Right ventricle myocardium inferior (tissue), 1 donor: ENCODE measurements at regions of chr6 and their contacts with region 1.

Region 1: DNA sequence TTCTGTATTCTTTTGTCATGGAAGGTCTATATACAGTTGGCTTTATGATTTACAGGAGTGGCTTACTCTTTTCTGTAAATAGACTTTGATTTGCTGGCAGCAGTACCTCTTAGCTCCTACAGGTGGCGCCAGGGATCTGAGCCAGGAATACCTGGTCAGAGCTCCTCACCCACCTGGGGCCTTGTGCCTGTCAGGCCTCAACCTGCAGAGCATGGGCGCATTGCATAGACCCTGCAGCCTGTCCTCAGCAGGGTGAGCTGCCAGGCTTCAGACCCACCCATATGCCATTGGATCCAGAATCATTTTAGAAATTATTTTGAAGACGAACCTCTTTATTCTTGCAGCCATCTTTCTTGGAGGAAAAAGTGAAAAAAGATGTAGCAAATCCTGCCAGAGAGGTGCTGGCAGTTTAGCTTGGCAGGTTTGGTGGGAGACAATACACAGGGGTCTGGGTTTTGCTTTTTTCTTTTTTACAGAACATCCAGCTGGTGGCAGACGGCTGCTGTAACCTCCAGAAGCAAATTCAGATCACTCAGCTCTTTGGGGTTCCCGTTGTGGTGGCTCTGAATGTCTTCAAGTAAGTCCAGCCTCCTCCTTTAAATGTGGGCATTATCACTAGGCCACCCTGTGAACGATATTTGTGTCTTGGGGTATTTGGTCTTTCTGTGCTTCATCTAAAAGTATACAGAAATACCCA is 149.1 kb downstream of the MTHFD1L start:
- DNase-seq: peak; percentile 82
- ATAC-seq: peak; percentile 81

Region 2: DNA sequence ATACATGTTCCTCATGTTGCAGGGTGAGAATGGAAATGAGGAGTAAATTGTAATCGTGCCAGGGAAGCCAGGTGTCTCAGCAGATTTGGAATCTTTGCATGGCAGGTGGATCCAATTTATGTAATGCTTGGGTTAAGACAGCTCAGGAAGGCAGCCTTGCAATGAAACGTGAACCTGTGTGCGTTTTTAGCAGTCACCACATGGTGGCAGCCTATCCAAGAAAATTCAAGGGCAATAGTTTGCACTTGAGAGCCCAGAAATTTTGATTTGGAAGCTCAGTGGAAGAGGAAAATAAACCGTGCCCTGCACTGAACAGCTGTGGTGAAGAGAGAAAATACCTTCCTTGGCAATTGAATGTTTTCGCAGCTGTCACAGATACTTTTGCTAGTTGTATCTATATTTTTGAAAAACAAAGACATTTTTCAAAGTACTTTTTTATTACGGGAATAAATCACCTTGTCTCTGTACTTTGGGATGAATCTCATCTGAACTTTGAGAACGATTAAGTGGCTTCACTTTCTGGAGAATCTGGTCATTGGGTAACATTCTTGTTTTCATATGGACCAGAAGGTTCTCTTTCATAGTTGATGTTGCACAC is 122.6 kb before region 1 on chr6:
- intact Hi-C with region 1: loop called (anchors 2 kb)
- DNase-seq: no peak
- ATAC-seq: peak; percentile 74

Region 3: DNA sequence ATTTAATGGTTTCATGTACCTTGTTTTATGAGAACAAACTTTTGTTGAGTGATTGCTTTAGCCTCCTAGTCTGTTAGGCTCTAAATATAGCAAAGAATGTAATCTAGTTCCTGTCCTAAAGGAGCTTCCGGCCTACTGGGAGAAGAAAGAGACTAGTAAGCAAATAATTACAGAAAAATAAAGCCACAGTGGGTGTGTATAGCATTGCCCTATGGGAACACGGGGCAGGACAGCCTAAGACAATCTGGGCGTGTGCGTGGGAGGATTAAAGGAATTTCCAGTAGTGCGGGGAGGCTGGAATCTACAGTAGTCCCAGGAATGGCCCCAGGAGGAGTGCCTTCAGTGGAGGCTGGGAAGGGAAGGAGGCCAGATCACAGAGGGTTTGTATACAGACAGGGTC is 127.1 kb after region 1 on chr6:
- intact Hi-C with region 1: loop called (anchors 10 kb)
- DNase-seq: no peak
- ATAC-seq: peak; percentile 65

Region 4: GRCh38 chr6:151240036-151240685 is 225.6 kb after region 1 on chr6:
- intact Hi-C with region 1: loop called (anchors 1 kb)
- DNase-seq: peak; percentile 89
- ATAC-seq: peak; percentile 92

Region 5: DNA sequence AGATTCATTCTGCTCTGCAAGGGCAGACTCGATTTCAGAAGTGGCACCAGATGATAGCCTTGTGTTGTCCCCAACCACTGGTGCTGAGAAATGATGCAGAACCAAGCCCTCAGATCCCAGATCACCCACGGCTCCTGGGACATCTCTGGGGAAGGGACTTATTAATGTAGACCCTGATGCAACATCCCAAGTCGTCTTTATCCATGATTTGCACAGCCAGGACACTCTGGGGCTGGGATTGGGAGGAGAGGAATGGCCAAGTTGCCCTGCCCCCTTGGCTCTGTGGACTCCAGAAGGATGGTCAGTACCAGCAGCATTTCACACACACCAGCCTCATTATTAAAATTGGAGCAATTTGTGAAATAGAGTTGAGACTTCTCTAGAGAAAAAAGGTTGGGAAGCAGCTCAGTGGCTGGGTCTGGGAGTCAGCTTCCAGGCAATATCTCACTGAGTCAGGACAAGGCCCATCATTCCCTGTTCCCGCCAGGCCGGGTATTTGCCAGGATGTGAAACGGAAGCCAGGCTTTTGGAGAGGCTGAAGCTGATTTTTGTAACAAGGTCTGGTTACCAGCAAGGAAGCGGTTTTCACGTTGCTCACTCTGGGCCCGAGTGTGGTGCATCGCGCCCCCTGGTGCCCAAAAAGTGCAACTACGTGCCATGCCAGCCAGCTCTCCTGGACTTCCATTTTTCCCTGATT is 309.4 kb after region 1 on chr6:
- intact Hi-C with region 1: loop called (anchors 1 kb)
- DNase-seq: peak; percentile 86
- ATAC-seq: peak; percentile 93